ENCODE measurements at regions of chr13 and their contacts with region 1.

Region 1: GRCh38 chr13:77697217-77698103 is at the start of gene SLAIN1:
- DNase-seq: peak; percentile 84 to 91 (median 86)
- H3K4me3 ChIP-seq: peak within 1 kb of the TSS; percentile 84 to 90
- H3K4me3 Mint-ChIP-seq: peak within 1 kb of the TSS; percentile 97 to 100 (median 99)
- H3K27ac ChIP-seq: peak within 1 kb of the TSS; percentile 82
- H3K27ac Mint-ChIP-seq: peak within 1 kb of the TSS; percentile 85 to 97 (median 94)
- H3K4me1 ChIP-seq: peaks cover 38% of the 10 kb centered on the region
- H3K4me1 Mint-ChIP-seq: peaks cover 31 to 55% (median 41%) of the 10 kb centered on the region in 4 donors
- H3K27me3 ChIP-seq: no peaks in the 10 kb centered on the region
- H3K27me3 Mint-ChIP-seq: no peaks in the 10 kb centered on the region
- total RNA-seq, gene SLAIN1: 55.1 to 58.9 TPM

Region 2: GRCh38 chr13:76980075-76980718 is 717.3 kb before region 1 on chr13:
- CTCF ChIA-PET with region 1: no interaction called
- POLR2A ChIA-PET with region 1: no interaction called
- intact Hi-C with region 1: no loop called
- DNase-seq: peak; percentile 72 to 83 (median 78)
- H3K4me3 ChIP-seq: no peak overlapping the region
- H3K4me3 Mint-ChIP-seq: peak overlapping the region in 6 of 8 donors; percentile 35 to 69 (median 54)
- H3K27ac ChIP-seq: no peak overlapping the region
- H3K27ac Mint-ChIP-seq: peak overlapping the region in 2 of 7 donors; percentile 29 to 48
- H3K4me1 ChIP-seq: peaks cover 20% of the 10 kb centered on the region
- H3K4me1 Mint-ChIP-seq: peaks cover 7 to 15% (median 10%) of the 10 kb centered on the region in 4 donors
- H3K27me3 ChIP-seq: no peaks in the 10 kb centered on the region
- H3K27me3 Mint-ChIP-seq: peaks cover 18% of the 10 kb centered on the region in 2 donors

Region 3: GRCh38 chr13:76991796-76992547 is 705.5 kb before region 1 on chr13 and contains the start of gene CLN5:
- CTCF ChIA-PET with region 1: no interaction called
- POLR2A ChIA-PET with region 1: interaction called, 6 read pairs
- intact Hi-C with region 1: loop called (anchors 2 kb)
- DNase-seq: peak; percentile 95 to 98 (median 97)
- H3K4me3 ChIP-seq: peak within 1 kb of the TSS; percentile 88 to 93
- H3K4me3 Mint-ChIP-seq: peak within 1 kb of the TSS; percentile 92 to 99 (median 96)
- H3K27ac ChIP-seq: peak within 1 kb of the TSS; percentile 95
- H3K27ac Mint-ChIP-seq: peak within 1 kb of the TSS; percentile 98 to 100 (median 100)
- H3K4me1 ChIP-seq: peaks cover 37% of the 10 kb centered on the region
- H3K4me1 Mint-ChIP-seq: peaks cover 26 to 52% (median 41%) of the 10 kb centered on the region in 4 donors
- H3K27me3 ChIP-seq: no peaks in the 10 kb centered on the region
- H3K27me3 Mint-ChIP-seq: peaks cover 3 to 7% of the 10 kb centered on the region in 2 donors
- total RNA-seq, gene CLN5: 41.5 to 48.6 TPM

Region 4: DNA sequence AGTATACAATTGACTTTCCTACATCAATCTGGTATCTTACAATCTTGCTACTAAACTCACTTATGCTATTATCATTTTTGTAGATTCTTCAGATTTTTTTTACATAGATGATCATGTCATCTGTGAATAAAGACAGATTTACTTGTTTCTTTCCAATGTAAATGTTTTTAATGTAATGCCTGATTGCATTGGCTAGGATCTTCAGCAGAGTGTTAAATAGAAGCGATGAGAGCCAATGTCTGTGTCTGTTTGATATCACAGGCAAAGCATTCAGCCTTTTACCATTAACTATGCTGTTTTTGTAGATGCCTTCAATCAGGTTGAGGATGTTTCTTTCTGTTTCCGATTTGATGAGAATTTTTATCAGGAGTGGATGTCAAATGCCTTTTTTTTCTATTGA is 19.2 kb after region 1 on chr13:
- CTCF ChIA-PET with region 1: no interaction called
- POLR2A ChIA-PET with region 1: interaction called, 3 read pairs
- intact Hi-C with region 1: loop called (anchors 2 kb)
- DNase-seq: no peak
- H3K4me3 ChIP-seq: no peak overlapping the region
- H3K4me3 Mint-ChIP-seq: no peak overlapping the region
- H3K27ac ChIP-seq: no peak overlapping the region
- H3K27ac Mint-ChIP-seq: no peak overlapping the region
- H3K4me1 ChIP-seq: peaks cover 5% of the 10 kb centered on the region
- H3K4me1 Mint-ChIP-seq: peaks cover 25 to 85% (median 44%) of the 10 kb centered on the region in 4 donors
- H3K27me3 ChIP-seq: no peaks in the 10 kb centered on the region
- H3K27me3 Mint-ChIP-seq: no peaks in the 10 kb centered on the region

Region 5: GRCh38 chr13:77751513-77752456 is 54.3 kb after region 1 on chr13:
- CTCF ChIA-PET with region 1: interaction called, 5 read pairs
- POLR2A ChIA-PET with region 1: interaction called, 3 read pairs
- intact Hi-C with region 1: loop called (anchors 2 kb)
- DNase-seq: peak; percentile 52 to 61 (median 58)
- H3K4me3 ChIP-seq: no peak overlapping the region
- H3K4me3 Mint-ChIP-seq: no peak overlapping the region
- H3K27ac ChIP-seq: no peak overlapping the region
- H3K27ac Mint-ChIP-seq: peak overlapping the region in 2 of 7 donors; percentile 12 to 43
- H3K4me1 ChIP-seq: peaks cover 5% of the 10 kb centered on the region
- H3K4me1 Mint-ChIP-seq: peaks cover 12 to 17% (median 14%) of the 10 kb centered on the region in 4 donors
- H3K27me3 ChIP-seq: no peaks in the 10 kb centered on the region
- H3K27me3 Mint-ChIP-seq: no peaks in the 10 kb centered on the region

Region 6: GRCh38 chr13:79393564-79394249 is 1696.2 kb after region 1 on chr13:
- CTCF ChIA-PET with region 1: no interaction called
- POLR2A ChIA-PET with region 1: no interaction called
- intact Hi-C with region 1: loop called (anchors 5 kb)
- DNase-seq: peak; percentile 40 to 61 (median 49)
- H3K4me3 ChIP-seq: peak overlapping the region; percentile 25 to 35
- H3K4me3 Mint-ChIP-seq: peak overlapping the region; percentile 75 to 88 (median 82)
- H3K27ac ChIP-seq: peak overlapping the region; percentile 40
- H3K27ac Mint-ChIP-seq: peak overlapping the region; percentile 87 to 93 (median 90)
- H3K4me1 ChIP-seq: peaks cover 62% of the 10 kb centered on the region
- H3K4me1 Mint-ChIP-seq: peaks cover 44 to 64% (median 56%) of the 10 kb centered on the region in 4 donors
- H3K27me3 ChIP-seq: no peaks in the 10 kb centered on the region
- H3K27me3 Mint-ChIP-seq: no peaks in the 10 kb centered on the region

Measured in CD4-positive, alpha-beta memory T cell (primary cell).